Breast epithelium (tissue), 4 donors: ENCODE measurements at regions of chrX and their contacts with region 1.

Region 1: DNA sequence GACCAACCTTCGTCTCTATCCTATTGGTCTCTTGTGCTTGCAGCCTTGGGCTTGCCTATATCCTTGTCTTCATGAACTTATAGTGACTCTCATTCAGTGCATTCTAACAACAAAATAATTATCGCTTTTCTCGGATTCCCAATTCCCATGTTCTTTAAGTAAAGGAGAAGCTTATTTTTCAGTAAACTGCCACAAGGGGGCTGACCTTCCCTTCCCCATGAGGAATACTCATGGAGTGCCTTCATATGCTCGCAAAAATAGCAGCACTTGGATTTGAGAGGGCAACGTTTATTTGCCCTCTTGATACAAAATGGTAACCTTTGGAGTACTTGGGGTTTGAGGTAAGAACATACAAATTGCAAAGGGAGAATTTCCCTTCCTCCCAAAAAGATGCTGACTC is 183.2 kb upstream of the TENT5D start:
- DNase-seq: no peak
- H3K4me3 ChIP-seq: no peak overlapping the region
- H3K27ac ChIP-seq: no peak overlapping the region
- H3K4me1 ChIP-seq: no peaks in the 10 kb centered on the region
- H3K27me3 ChIP-seq: peaks cover 0 to 25% of the 10 kb centered on the region in 2 donors
- CTCF ChIP-seq: no peak
- POLR2A ChIP-seq: no peak

Region 2: DNA sequence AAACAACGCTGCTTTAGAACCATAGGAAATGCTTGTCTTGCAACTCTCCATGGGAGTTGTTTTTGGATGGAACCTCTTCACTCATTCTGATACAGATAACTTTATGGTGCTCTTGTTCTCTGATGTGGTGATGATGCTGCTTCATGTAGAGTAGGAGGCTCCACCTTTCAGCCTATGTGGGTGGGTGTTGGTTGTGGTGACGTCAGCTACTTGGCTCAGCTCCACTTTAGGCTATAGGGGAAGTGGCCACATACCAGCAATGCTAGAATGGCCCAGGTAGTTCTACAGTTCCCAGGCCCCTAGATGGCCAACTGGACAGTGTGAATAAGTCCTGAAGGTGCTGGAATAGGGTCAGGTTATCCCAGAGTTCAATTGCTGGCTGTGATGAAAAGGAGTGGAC is 30.4 kb before region 1 on chrX:
- intact Hi-C with region 1: loop called (anchors 2 kb)
- DNase-seq: no peak
- H3K4me3 ChIP-seq: no peak overlapping the region
- H3K27ac ChIP-seq: no peak overlapping the region
- H3K4me1 ChIP-seq: no peaks in the 10 kb centered on the region
- H3K27me3 ChIP-seq: peaks cover 0 to 15% of the 10 kb centered on the region in 2 donors
- CTCF ChIP-seq: no peak
- POLR2A ChIP-seq: no peak

Region 3: DNA sequence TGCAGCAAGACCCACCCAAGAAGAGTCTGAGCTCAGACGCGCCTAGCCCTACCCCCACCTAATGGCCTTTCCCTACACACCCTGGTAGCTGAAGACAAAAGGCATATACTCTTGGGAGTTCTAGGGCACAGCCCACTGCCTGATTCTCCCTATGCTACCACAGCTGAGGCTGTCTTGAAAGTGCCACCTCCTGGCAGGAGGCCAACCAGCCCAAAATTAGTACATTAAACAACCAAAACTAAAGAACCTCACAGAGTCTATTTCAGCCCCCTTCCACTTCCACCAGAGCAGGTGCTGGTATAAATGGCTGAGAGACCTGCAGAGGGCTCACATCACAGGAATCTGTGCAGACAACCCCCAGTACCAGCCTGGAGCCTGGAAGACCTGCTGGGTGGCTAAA is 845.6 kb after region 1 on chrX:
- intact Hi-C with region 1: no loop called
- DNase-seq: no peak
- H3K4me3 ChIP-seq: no peak overlapping the region
- H3K27ac ChIP-seq: no peak overlapping the region
- H3K4me1 ChIP-seq: no peaks in the 10 kb centered on the region
- H3K27me3 ChIP-seq: peaks cover 0 to 8% of the 10 kb centered on the region in 2 donors
- CTCF ChIP-seq: no peak
- POLR2A ChIP-seq: no peak